Left colon (tissue), 2 donors: ENCODE measurements at regions of chr12 and their contacts with region 1.

Region 1: DNA sequence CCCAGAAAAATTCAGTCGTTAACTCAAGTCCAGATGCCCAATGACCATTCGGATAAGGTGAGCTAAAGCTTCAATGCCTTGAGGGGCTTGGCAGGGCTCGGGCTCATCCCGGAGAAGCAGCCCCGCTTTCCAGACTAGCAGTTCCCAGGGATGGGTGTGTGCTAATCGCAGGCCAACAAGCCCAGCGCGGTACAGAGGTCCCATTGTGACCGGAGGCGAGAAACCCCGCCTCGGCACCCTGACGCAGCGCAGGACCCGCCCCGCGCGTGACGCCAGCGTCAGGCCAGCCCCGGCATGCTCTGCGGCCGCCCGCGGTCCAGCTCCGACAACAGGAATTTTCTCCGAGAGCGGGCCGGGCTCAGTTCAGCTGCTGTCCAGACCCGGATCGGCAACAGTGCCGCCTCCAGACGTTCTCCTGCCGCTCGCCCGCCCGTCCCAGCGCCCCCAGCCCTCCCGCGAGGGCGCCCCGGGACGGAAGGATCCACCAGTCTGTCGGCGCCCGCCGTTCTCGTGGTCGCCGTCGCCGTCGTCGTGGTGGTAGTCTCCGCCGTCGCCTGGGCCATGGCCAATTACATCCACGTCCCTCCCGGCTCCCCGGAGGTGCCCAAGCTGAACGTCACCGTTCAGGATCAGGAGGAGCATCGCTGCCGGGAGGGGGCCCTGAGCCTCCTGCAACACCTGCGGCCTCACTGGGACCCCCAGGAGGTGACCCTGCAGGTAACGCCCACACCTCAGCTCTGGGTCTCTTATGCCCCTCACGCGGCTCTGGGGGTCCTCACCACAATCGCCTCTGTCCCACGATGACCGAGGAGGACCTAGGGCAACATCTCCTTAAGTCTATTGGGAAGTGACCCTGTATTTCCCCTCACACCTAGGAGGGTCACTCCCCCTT is at the start of gene ETNK1:
- DNase-seq: peak; percentile 94 to 97
- ATAC-seq: peak; percentile 96
- total RNA-seq, gene ETNK1: 81.3 to 115 TPM

Region 2: DNA sequence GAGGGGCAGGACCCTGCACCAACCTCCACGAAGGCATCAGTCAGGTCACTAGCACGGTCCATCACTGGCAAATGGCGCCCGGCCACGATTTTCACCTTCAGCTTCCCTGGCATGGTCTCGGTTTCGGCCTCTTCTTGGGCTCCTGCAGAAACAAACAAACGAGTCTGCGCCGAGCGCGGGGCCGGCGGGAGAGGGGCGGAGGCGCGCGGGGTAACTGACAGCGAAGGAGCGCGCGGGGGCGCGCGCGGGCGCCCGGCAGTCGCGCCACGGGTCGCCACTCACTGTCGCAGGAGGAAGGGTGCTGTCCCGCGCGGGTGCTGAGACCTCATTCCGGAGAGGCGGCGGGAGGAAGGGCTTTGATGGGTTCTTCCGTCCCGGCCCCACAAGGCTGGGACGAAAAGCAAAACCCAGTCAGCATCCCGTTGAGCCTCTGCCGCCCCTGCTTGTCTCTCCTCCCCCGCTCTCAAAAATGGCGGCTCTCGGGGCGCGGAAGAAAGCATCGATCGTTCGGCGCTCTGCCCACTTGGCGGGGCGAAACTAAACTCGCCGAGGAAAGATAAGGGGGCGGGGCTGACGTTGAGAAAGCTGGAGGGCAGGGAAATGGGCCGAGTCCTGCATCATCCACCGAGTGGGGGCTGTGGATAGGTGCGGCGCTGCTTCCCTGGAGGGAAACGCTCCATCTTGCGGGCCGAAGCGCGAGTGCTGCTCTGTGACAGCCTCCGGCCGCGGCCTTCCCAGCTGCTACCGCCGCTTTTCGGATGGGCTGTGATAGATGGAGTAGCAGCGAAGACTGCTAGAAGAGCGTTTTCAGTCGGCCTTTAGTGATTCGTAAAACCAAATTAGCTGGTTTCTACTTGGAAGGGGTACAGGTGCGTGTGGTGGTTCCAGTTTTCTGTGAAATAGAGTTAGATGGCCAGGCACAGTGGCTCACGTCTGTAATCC is 80.8 kb before region 1 on chr12 and contains the start of gene C2CD5:
- intact Hi-C with region 1: loop called in 1 of 2 experiments (anchors 5 kb)
- DNase-seq: peak; percentile 98
- ATAC-seq: peak; percentile 87
- total RNA-seq, gene C2CD5: 53.6 to 56.9 TPM

Region 3: GRCh38 chr12:22684140-22685118 is 59.3 kb after region 1 on chr12:
- intact Hi-C with region 1: no loop called
- DNase-seq: no peak
- ATAC-seq: peak; percentile 43